ENCODE measurements at regions of chr4 and their contacts with region 1.

Region 1: GRCh38 chr4:6716018-6716911 is at the start of gene BLOC1S4:
- DNase-seq: peak; percentile 94
- H3K4me3 ChIP-seq: peak within 1 kb of the TSS; percentile 61 to 81 (median 70)
- H3K27ac ChIP-seq: peak within 1 kb of the TSS; percentile 88 to 94 (median 92)
- H3K4me1 ChIP-seq: peaks cover 0 to 34% (median 28%) of the 10 kb centered on the region in 4 donors
- H3K27me3 ChIP-seq: no peaks in the 10 kb centered on the region
- CTCF ChIP-seq: no peak
- EP300 ChIP-seq: no peak
- POLR2A ChIP-seq: peak; percentile 47 to 67
- total RNA-seq, gene BLOC1S4: 9.1 to 19.7 (median 14.6) TPM

Region 2: GRCh38 chr4:6470502-6471306 is 245.6 kb before region 1 on chr4:
- intact Hi-C with region 1: no loop called
- DNase-seq: peak; percentile 75
- H3K4me3 ChIP-seq: peak overlapping the region; percentile 14 to 56 (median 50)
- H3K27ac ChIP-seq: peak overlapping the region in 1 of 4 donors; percentile 30
- H3K4me1 ChIP-seq: peaks cover 0 to 21% (median 20%) of the 10 kb centered on the region in 4 donors
- H3K27me3 ChIP-seq: peaks cover 7 to 82% (median 62%) of the 10 kb centered on the region in 3 donors
- CTCF ChIP-seq: no peak
- EP300 ChIP-seq: no peak
- POLR2A ChIP-seq: no peak

Region 3: DNA sequence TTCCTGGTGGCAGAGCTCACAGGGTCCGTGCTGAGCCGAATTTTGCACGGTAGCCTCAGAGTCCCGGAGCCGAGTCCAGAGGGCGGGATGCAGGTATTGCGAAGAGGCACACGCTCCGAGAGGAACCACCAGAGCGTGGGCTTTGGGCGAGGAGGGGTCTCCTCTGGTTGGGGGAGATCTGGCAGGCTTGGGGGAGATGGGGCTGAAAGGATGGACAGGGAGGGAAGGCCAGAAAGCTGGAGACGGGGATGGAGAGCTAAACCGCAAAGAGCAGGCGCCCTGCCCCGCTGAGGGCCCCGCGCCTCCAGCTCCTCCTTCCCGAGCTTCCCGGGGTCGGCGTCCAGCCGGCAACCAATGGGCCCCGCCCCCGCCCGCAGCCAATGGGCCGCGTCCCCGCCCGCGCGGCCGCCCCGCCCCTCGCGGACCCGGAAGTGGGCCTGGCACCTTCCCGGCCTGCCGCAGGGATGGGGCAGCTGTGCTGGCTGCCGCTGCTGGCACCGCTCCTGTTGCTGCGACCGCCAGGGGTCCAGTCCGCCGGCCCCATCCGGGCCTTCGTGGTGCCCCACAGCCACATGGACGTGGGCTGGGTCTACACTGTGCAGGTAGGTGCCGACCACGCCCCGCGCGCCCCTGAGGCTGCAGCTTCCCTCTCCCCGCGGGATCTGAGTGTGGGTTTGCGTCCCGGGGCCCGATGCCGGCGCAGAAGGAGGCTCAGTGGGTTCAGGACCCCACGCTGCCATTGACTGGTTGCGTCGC is 141.3 kb before region 1 on chr4 and contains the start of gene MAN2B2:
- intact Hi-C with region 1: loop called (anchors 5 kb)
- DNase-seq: peak; percentile 93
- H3K4me3 ChIP-seq: peak within 1 kb of the TSS; percentile 71 to 93 (median 86)
- H3K27ac ChIP-seq: peak within 1 kb of the TSS; percentile 74 to 81 (median 76)
- H3K4me1 ChIP-seq: peaks cover 0 to 24% (median 17%) of the 10 kb centered on the region in 4 donors
- H3K27me3 ChIP-seq: no peaks in the 10 kb centered on the region
- CTCF ChIP-seq: no peak
- EP300 ChIP-seq: no peak
- POLR2A ChIP-seq: peak in 1 of 2 donors; percentile 32
- total RNA-seq, gene MAN2B2: 12.7 to 24.3 (median 20.2) TPM

Region 4: DNA sequence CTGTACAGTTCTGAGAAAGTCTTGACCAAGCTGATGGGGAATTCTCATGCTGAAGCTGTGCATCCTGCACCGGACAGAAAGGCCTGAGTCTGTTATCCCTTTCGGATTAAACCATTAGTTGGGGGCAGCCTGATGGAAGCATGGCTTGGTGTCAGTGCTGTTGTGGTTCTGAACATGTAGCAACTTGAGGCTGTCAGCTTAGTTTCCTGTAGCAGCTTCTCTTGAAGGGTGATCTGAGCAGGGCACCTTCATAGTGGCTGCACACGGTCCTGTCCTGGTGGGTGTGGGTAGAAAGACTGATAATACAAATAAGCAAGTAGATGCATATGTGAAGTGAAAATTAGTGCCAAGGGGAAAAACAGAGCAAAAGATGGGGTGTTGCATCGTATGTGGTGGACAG is 77.9 kb after region 1 on chr4:
- intact Hi-C with region 1: no loop called
- DNase-seq: no peak
- H3K4me3 ChIP-seq: no peak overlapping the region
- H3K27ac ChIP-seq: no peak overlapping the region
- H3K4me1 ChIP-seq: peaks cover 0 to 39% (median 29%) of the 10 kb centered on the region in 4 donors
- H3K27me3 ChIP-seq: no peaks in the 10 kb centered on the region
- CTCF ChIP-seq: no peak
- EP300 ChIP-seq: no peak
- POLR2A ChIP-seq: no peak

Region 5: GRCh38 chr4:6873792-6874461 is 157.7 kb after region 1 on chr4:
- intact Hi-C with region 1: loop called (anchors 1 kb)
- DNase-seq: peak; percentile 77
- H3K4me3 ChIP-seq: no peak overlapping the region
- H3K27ac ChIP-seq: no peak overlapping the region
- H3K4me1 ChIP-seq: peaks cover 0 to 5% (median 0%) of the 10 kb centered on the region in 4 donors
- H3K27me3 ChIP-seq: no peaks in the 10 kb centered on the region
- CTCF ChIP-seq: peak; percentile 39 to 82 (median 78)
- EP300 ChIP-seq: no peak
- POLR2A ChIP-seq: no peak

Region 6: GRCh38 chr4:7042697-7043464 is 326.6 kb after region 1 on chr4 and contains the start of gene TADA2B:
- intact Hi-C with region 1: loop called (anchors 10 kb)
- DNase-seq: peak; percentile 99
- H3K4me3 ChIP-seq: peak within 1 kb of the TSS; percentile 86 to 99 (median 98)
- H3K27ac ChIP-seq: peak within 1 kb of the TSS; percentile 91 to 95 (median 92)
- H3K4me1 ChIP-seq: peaks cover 0 to 51% (median 47%) of the 10 kb centered on the region in 4 donors
- H3K27me3 ChIP-seq: no peaks in the 10 kb centered on the region
- CTCF ChIP-seq: peak in 1 of 4 experiments; percentile 30
- EP300 ChIP-seq: no peak
- POLR2A ChIP-seq: no peak
- total RNA-seq, gene TADA2B: 15.0 to 22.7 (median 17.2) TPM

Region 7: GRCh38 chr4:7067452-7068278 is 351.4 kb after region 1 on chr4 and contains the start of gene GRPEL1:
- intact Hi-C with region 1: loop called (anchors 2 kb)
- DNase-seq: peak; percentile 100
- H3K4me3 ChIP-seq: peak within 1 kb of the TSS; percentile 56 to 99 (median 90)
- H3K27ac ChIP-seq: peak within 1 kb of the TSS; percentile 88 to 95 (median 92)
- H3K4me1 ChIP-seq: peaks cover 0 to 39% (median 28%) of the 10 kb centered on the region in 4 donors
- H3K27me3 ChIP-seq: no peaks in the 10 kb centered on the region
- CTCF ChIP-seq: no peak
- EP300 ChIP-seq: no peak
- POLR2A ChIP-seq: peak; percentile 93 to 95
- total RNA-seq, gene GRPEL1: 7.5 to 23.2 (median 15.0) TPM

Measured in sigmoid colon (tissue), 7 donors.